GM10248 (cell line): ENCODE measurements at regions of chr6 and their contacts with region 1.

Region 1: DNA sequence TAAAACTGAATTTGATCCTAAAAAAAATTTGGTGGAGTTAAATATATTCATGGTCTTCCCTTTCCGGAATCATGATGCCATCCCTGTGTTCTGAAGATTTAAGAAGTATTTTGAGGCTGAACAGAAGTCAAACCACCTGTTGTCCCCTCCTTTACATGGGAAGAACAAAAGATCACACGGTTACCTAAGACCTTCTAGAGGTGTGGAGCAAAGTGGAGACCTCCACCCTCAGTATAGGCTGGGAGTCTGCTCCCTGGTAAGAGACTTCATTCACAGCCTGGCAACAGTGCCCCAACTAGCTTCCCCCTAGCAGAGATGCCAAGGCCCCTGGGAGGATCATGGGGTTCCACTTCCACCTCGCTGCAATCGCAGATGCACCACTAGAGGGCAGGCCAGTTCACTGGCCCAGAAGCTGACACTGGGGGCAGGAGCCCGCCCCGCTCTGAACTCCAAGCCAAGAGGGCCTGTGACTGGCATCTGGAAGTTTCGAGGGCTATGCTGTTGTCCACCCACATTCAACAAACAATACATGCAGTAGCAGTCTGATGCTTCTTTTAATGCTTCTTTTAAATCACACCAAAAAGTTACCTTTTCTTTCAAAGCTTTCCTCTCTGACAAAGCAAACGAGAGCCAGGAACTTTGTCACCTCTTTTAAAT is 19.5 kb upstream of the UBE2J1 start:
- DNase-seq: peak; percentile 75
- CTCF ChIP-seq: peak; percentile 98

Region 2: GRCh38 chr6:88982720-88983119 is 389.3 kb before region 1 on chr6:
- CTCF ChIA-PET with region 1: interaction called, 25 read pairs
- POLR2A ChIA-PET with region 1: no interaction called
- DNase-seq: peak; percentile 55
- CTCF ChIP-seq: peak; percentile 76

Region 3: DNA sequence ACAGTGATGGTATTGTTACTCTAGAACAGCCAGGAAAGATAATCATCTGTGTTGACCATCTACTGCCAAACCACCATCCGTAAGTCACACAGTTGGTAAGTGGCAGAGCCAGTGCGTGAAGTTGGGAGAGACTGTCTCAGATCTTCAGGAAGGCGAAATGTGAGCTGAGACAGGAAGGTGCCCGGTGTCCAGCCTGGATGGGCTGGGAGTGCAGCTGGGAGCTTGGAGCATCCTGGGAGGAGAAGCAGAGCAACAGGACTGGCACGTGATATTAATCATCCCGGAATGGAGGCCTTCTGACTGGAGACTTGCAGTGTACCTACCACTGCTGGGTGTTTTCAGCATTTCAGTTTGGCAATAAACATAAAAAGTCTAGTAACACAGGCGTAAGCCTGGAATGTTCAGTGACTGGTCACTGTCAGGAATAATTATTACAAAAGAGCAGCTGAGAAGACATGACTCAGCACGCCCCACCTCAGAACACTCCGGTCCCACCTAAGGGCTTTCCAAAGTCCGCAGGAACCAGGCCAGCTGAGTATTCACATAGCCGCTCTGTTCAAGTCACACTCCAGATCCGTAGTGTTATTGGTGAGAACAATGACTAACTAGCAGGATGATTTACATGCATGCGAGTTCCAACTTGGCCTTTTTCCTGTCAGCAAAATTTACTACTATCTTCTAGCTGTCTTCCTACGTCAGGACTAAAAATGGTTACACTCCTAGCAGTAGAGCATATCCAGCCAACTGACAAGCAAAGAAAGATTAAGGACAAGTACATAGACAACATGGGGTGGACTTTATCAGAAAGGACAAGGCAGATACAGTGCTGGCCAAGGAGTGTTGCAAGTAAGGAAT is 336.5 kb before region 1 on chr6:
- CTCF ChIA-PET with region 1: no interaction called
- POLR2A ChIA-PET with region 1: no interaction called
- DNase-seq: no peak
- CTCF ChIP-seq: no peak

Region 4: GRCh38 chr6:89051676-89052075 is 320.3 kb before region 1 on chr6:
- CTCF ChIA-PET with region 1: no interaction called
- POLR2A ChIA-PET with region 1: no interaction called
- DNase-seq: no peak
- CTCF ChIP-seq: no peak

Region 5: DNA sequence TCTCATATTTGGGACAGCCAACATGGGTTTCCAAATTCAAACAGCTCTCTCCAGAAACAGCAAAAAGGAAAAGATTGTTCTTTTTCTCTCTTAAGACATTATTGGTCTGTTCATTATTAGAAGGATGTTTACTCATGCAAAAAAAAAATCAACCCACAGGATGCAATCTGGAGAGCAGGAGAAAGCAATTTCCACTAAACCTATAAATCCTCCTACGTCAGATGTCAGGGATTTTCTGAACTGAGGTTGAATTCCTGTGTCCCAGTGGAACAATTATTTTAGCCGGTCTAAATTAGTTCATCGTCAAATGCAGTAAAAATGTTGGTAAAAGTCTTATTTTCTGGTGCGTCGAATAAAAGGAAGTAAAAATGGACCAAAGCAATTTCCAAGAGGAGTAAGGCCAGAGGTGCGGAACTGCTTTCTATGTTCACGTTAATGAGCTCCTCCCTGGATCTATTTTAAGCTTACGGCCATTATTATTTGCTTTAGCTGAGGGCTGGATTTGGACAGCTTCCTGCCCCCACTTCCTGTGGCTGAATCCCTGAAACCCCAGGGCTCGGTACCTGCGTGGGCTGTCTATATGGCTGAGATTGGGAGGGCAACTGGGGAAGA is 154.6 kb before region 1 on chr6 and contains the start of gene GABRR1:
- CTCF ChIA-PET with region 1: no interaction called
- POLR2A ChIA-PET with region 1: no interaction called
- DNase-seq: no peak
- CTCF ChIP-seq: no peak

Region 6: GRCh38 chr6:89302936-89303335 is 69.0 kb before region 1 on chr6:
- CTCF ChIA-PET with region 1: interaction called, 15 read pairs
- POLR2A ChIA-PET with region 1: no interaction called
- DNase-seq: peak; percentile 7
- CTCF ChIP-seq: no peak

Region 7: GRCh38 chr6:89360415-89360999 is 11.5 kb before region 1 on chr6:
- CTCF ChIA-PET with region 1: interaction called, 75 read pairs
- POLR2A ChIA-PET with region 1: no interaction called
- DNase-seq: peak; percentile 49
- CTCF ChIP-seq: no peak

Region 8: DNA sequence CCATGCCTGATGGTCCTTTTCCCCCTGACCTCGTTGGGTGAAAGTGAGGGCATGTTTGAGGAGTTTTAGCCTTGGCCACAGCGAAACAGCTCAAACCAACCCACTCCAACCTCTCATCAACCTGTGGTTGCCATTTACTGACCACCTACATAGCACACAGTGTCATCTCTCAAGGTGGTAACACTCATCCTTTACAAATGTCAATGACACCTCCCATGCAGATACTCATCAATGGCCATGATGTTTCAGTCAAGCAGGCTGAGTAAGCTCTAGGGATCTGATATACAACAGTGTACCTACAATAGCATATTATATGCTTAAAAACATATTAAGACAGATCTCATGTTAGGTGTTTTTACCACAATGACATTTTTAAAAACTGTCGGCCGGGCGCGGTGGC is 30.8 kb after region 1 on chr6:
- CTCF ChIA-PET with region 1: interaction called, 13 read pairs
- POLR2A ChIA-PET with region 1: no interaction called
- DNase-seq: no peak
- CTCF ChIP-seq: no peak

Region 9: DNA sequence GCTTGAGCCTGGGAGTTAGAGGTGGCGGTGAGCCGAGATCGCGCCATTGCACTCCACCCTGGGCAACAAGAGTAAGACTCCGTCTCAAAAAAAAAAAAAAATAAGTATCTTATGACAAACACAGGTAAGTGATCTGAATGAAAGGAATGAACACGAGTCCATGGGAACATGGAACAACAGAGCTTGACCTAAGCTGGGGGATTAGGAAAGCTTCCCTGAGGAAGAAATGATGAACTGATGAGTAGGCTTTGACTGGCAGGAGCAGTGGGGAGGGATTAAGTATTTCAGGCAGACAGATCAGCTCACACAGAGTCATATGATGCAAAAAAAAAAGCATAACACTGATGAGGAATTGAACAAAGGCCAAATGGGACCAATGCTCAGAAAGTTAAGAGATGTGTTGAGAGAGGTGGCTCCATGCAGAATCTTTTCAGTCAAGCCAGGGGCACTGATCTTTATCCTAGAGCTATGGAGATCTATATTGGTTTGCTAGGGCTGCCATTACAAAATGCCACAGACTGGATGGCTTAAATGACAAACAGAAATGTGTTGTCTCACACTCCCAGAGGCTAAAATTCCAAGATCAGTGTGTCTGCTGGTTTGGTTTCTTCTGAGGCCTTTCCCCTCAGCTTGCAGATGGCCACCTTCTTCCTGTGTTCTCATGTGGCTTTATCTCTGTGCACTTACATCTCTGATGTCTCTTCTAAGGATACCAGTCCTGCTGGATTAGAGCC is 146.5 kb after region 1 on chr6:
- CTCF ChIA-PET with region 1: no interaction called
- POLR2A ChIA-PET with region 1: no interaction called
- DNase-seq: no peak
- CTCF ChIP-seq: no peak

Region 10: GRCh38 chr6:89610149-89610642 is 238.2 kb after region 1 on chr6:
- CTCF ChIA-PET with region 1: interaction called, 36 read pairs
- POLR2A ChIA-PET with region 1: no interaction called
- DNase-seq: peak; percentile 71
- CTCF ChIP-seq: peak; percentile 88